ENCODE measurements at regions of chr6 and their contacts with region 1.

Region 1: DNA sequence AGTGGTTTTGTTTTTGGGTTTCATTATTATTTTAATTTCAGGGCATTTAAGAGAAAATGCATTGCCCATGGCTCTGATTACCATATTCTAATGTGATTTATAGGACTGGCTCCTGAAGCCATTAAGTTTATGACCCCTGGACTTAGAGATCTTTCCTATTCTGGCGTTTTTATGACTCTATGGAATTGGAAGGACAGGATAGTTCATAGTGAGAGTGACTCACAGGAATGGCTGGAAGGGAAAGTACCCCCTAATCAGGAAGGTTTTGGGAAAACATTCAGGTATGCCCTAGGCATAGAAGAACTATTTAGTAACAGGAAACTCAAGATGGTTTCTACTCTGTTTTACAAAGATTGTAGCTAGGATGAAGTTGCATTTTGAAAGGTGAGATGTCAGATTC is 108.6 kb upstream of the SLC2A12 start:
- DNase-seq: no peak
- H3K4me3 ChIP-seq: no peak overlapping the region
- H3K27ac ChIP-seq: no peak overlapping the region
- H3K4me1 ChIP-seq: no peaks in the 10 kb centered on the region
- H3K27me3 ChIP-seq: no peaks in the 10 kb centered on the region
- CTCF ChIP-seq: no peak
- EP300 ChIP-seq: no peak
- POLR2A ChIP-seq: no peak

Region 2: GRCh38 chr6:134882426-134883038 is 721.5 kb after region 1 on chr6:
- intact Hi-C with region 1: loop called in 3 of 4 experiments (anchors 2 to 10 kb)
- DNase-seq: peak; percentile 48 to 84 (median 79)
- H3K4me3 ChIP-seq: no peak overlapping the region
- H3K27ac ChIP-seq: peak overlapping the region in 1 of 2 donors; percentile 27
- H3K4me1 ChIP-seq: no peaks in the 10 kb centered on the region
- H3K27me3 ChIP-seq: no peaks in the 10 kb centered on the region
- CTCF ChIP-seq: peak; percentile 81 to 95 (median 86)
- EP300 ChIP-seq: no peak
- POLR2A ChIP-seq: no peak

Region 3: DNA sequence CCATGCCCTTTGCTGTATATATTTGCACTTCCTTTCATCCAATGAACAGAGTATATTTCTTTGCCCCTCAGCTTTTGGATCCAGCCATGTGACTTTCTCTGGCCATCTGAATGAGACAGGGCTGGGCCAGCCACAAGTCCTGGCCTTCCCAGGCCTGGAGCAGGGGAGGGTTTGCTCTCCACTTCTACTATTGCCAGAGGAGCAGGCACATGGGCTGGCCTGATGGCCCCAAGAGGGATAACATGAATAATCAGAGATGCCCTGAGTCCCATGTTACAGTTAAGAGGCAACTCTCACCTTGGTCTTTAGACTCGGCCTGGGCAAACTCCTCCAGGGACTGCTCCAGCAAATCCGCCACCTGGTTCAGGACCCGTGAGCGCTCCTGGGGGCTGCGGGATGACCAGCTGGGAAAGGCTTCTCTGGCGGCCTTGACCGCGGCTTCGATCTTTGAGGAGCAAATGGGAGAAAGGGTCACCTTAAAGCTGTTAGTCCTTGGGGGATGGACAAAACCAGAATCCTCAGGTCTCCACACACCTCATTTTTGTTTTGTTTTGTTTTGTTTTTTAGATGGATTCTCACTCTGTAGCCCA is 782.6 kb after region 1 on chr6:
- intact Hi-C with region 1: loop called in 3 of 4 experiments (anchors 5 to 10 kb)
- DNase-seq: no peak
- H3K4me3 ChIP-seq: no peak overlapping the region
- H3K27ac ChIP-seq: no peak overlapping the region
- H3K4me1 ChIP-seq: no peaks in the 10 kb centered on the region
- H3K27me3 ChIP-seq: no peaks in the 10 kb centered on the region
- CTCF ChIP-seq: no peak
- EP300 ChIP-seq: no peak
- POLR2A ChIP-seq: no peak

Measured in ovary (tissue), 10 donors.